ENCODE measurements at regions of chr4 and their contacts with region 1.

Region 1: DNA sequence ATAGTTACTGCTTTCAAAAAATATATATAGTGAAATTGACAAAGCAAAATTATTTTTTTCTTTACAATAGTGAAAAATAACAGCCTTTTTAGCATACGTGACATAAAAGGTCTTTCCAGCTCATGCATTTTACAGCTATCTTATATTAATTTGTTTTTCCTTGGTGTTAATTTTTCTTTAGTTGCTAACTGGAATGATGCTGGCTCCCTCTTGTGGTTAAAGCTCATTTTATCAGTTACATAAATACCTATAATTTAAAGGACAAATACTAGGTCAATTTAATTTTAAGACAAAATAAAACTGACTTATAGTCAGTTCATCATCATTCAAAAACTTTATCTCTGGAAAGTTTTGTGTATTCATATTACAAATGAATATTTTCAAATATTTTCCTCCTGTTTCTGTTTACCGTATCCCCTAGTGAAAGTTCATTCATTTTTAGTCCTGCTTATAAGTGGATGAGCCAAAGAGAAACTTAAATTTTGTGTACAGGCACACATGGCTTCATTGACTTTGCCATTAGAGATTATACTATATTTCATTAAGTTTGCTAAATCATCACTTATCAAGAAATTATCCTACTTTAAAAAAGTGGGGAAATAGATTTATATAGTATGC is 9.9 kb upstream of the ANAPC4 start:
- DNase-seq: peak; percentile 59
- ATAC-seq: peak; percentile 49
- H3K4me3 ChIP-seq: no peak overlapping the region
- H3K27ac ChIP-seq: no peak overlapping the region
- H3K4me1 ChIP-seq: no peaks in the 10 kb centered on the region
- H3K27me3 ChIP-seq: no peaks in the 10 kb centered on the region
- CTCF ChIP-seq: peak; percentile 79
- POLR2A ChIP-seq: no peak
- RAD21 ChIP-seq: peak; percentile 81

Region 2: GRCh38 chr4:25159884-25160713 is 207.0 kb before region 1 on chr4 and contains the start of gene SEPSECS:
- CTCF ChIA-PET with region 1: no interaction called
- POLR2A ChIA-PET with region 1: no interaction called
- dilution Hi-C with region 1: no loop called
- in situ Hi-C with region 1: no loop called
- intact Hi-C with region 1: loop called (anchors 2 kb)
- DNase-seq: peak; percentile 95
- ATAC-seq: peak; percentile 87
- H3K4me3 ChIP-seq: peak within 1 kb of the TSS; percentile 66
- H3K27ac ChIP-seq: peak within 1 kb of the TSS; percentile 81
- H3K4me1 ChIP-seq: peaks cover 2% of the 10 kb centered on the region; the same call in 1 of the 2 replicates
- H3K27me3 ChIP-seq: no peaks in the 10 kb centered on the region
- CTCF ChIP-seq: no peak
- POLR2A ChIP-seq: peak; percentile 63; the same call in 1 of the 2 replicates
- RAD21 ChIP-seq: 0 out of 2 replicates have a peak, but pooled peaks have one; percentile 1
- total RNA-seq, gene SEPSECS: 5.0 and 6.7 TPM in 2 replicates

Region 3: DNA sequence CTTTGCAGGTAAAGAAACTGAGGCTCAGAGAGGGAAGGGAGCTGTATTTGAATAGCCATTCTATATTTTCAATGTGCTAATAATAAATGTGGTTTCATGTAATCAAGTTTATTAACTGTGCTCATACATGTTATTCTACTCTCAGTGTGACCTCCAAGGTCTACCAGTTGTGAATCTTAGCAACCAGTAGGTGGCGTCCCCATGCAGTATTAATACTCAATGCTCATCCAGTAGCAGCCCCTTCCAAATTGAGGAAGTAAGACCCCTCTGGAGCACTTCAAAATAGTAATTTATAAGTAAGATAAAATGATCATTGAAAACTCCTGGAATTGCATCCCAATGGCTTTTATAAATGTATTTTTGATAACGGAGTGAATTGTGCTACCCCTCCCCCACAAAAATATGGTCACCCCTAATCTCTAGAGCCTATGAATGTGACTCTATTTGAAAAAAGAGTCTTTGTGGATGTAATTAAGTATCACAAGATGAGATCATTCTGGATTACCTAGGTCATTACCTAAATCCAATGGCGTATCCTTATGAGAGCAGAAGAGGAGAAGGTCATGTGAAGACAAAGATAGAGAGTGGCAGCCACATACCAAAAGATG is 186.5 kb before region 1 on chr4:
- CTCF ChIA-PET with region 1: interaction called, 4 read pairs
- POLR2A ChIA-PET with region 1: no interaction called
- dilution Hi-C with region 1: no loop called
- in situ Hi-C with region 1: loop called (anchors 10 kb)
- intact Hi-C with region 1: loop called (anchors 1 kb)
- DNase-seq: peak; percentile 46
- ATAC-seq: peak; percentile 85
- H3K4me3 ChIP-seq: no peak overlapping the region
- H3K27ac ChIP-seq: no peak overlapping the region
- H3K4me1 ChIP-seq: peaks cover 2% of the 10 kb centered on the region; the same call in 1 of the 2 replicates
- H3K27me3 ChIP-seq: no peaks in the 10 kb centered on the region
- CTCF ChIP-seq: peak; percentile 59
- POLR2A ChIP-seq: no peak
- RAD21 ChIP-seq: peak; percentile 52

Region 4: GRCh38 chr4:25234390-25235370 is 132.4 kb before region 1 on chr4:
- CTCF ChIA-PET with region 1: interaction called, 3 read pairs
- POLR2A ChIA-PET with region 1: no interaction called
- dilution Hi-C with region 1: no loop called
- in situ Hi-C with region 1: no loop called
- intact Hi-C with region 1: loop called (anchors 10 kb)
- DNase-seq: peak; percentile 81
- ATAC-seq: peak; percentile 79
- H3K4me3 ChIP-seq: peak overlapping the region; percentile 91
- H3K27ac ChIP-seq: peak overlapping the region; percentile 75
- H3K4me1 ChIP-seq: 0 out of 2 replicates have a peak, but pooled peaks cover 2% of the 10 kb centered on the region
- H3K27me3 ChIP-seq: no peaks in the 10 kb centered on the region; the same call in 1 of the 2 replicates
- CTCF ChIP-seq: peak; percentile 60
- POLR2A ChIP-seq: no peak
- RAD21 ChIP-seq: peak; percentile 47

Region 5: DNA sequence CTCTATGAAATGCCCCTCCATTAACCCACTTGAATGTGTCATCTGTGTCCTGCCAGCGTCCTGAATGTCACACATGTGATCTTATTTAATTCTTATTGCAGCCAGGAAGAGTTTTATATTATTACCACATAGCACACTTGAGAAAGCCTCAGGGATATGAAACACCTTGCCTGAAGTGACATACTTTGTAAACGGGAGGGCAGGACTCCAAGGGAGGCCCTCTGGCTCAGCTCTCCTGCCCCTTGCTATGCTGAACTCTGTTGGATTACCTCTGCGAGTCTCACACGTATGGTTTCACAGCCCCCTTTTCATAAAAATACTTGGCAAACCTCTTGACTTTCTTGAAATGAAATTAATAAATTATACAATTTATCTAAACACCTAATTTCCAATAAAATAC is 65.6 kb before region 1 on chr4:
- CTCF ChIA-PET with region 1: no interaction called
- POLR2A ChIA-PET with region 1: no interaction called
- dilution Hi-C with region 1: no loop called
- in situ Hi-C with region 1: no loop called
- intact Hi-C with region 1: no loop called
- DNase-seq: no peak
- ATAC-seq: no peak
- H3K4me3 ChIP-seq: no peak overlapping the region
- H3K27ac ChIP-seq: no peak overlapping the region
- H3K4me1 ChIP-seq: no peaks in the 10 kb centered on the region
- H3K27me3 ChIP-seq: peaks cover 14% of the 10 kb centered on the region
- CTCF ChIP-seq: no peak
- POLR2A ChIP-seq: no peak
- RAD21 ChIP-seq: no peak

Region 6: DNA sequence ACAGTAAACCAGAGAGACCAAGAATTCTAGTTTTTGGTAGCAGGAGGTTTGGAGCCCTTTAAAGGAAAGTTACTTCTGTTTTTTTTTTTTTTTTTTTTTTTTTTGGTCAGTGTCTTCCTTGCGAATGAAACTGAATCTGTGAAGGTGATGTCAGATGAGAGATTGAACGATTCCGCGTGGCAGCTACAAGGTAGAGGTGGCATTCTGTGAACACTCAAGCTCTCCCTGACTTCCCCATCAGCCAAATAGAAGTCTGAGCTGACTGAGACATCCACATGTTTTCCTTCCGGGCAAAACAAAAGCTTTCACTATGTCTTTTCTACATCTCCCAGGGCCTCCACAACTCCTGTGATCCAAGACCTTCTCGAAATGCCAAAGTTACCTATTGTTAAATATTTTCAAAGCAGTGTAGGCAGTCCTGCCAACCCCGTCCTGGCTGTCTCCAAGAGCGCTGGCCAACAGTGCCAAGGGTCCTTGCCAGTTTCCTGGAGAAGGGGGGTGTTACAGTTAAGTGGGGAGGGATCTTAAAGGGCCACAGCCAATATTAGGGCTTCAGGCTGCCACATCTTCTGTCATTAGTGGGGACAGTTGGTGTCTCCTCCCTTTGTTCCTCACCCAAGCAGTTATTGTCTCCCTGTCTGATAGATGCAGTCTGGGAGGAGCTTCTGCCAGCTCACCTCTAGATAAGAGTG is 185.6 kb after region 1 on chr4:
- CTCF ChIA-PET with region 1: no interaction called
- POLR2A ChIA-PET with region 1: no interaction called
- dilution Hi-C with region 1: no loop called
- in situ Hi-C with region 1: no loop called
- intact Hi-C with region 1: no loop called
- DNase-seq: no peak
- ATAC-seq: no peak
- H3K4me3 ChIP-seq: no peak overlapping the region
- H3K27ac ChIP-seq: no peak overlapping the region
- H3K4me1 ChIP-seq: no peaks in the 10 kb centered on the region
- H3K27me3 ChIP-seq: peaks cover 2% of the 10 kb centered on the region; the same call in 1 of the 2 replicates
- CTCF ChIP-seq: no peak
- POLR2A ChIP-seq: no peak
- RAD21 ChIP-seq: no peak

Measured in IMR-90 (cell line).